SK-N-SH (cell line): ENCODE measurements at regions of chr5 and their contacts with region 1.

Region 1: GRCh38 chr5:179284751-179285631 is 60.3 kb downstream of the ADAMTS2 start:
- DNase-seq: peak; percentile 89
- H3K4me3 ChIP-seq: no peak overlapping the region
- H3K27ac ChIP-seq: peak overlapping the region in 1 of 2 experiments; percentile 97; a peak in 2 of 4 replicates
- H3K4me1 ChIP-seq: peaks cover 0 to 66% of the 10 kb centered on the region in 2 experiments; a peak in 2 of 4 replicates
- H3K27me3 ChIP-seq: no peaks in the 10 kb centered on the region
- CTCF ChIP-seq: no peak
- EP300 ChIP-seq: peak in 1 of 2 experiments; percentile 88; a peak in 2 of 4 replicates
- RAD21 ChIP-seq: peak; percentile 14; the same call in 1 of the 2 replicates

Region 2: DNA sequence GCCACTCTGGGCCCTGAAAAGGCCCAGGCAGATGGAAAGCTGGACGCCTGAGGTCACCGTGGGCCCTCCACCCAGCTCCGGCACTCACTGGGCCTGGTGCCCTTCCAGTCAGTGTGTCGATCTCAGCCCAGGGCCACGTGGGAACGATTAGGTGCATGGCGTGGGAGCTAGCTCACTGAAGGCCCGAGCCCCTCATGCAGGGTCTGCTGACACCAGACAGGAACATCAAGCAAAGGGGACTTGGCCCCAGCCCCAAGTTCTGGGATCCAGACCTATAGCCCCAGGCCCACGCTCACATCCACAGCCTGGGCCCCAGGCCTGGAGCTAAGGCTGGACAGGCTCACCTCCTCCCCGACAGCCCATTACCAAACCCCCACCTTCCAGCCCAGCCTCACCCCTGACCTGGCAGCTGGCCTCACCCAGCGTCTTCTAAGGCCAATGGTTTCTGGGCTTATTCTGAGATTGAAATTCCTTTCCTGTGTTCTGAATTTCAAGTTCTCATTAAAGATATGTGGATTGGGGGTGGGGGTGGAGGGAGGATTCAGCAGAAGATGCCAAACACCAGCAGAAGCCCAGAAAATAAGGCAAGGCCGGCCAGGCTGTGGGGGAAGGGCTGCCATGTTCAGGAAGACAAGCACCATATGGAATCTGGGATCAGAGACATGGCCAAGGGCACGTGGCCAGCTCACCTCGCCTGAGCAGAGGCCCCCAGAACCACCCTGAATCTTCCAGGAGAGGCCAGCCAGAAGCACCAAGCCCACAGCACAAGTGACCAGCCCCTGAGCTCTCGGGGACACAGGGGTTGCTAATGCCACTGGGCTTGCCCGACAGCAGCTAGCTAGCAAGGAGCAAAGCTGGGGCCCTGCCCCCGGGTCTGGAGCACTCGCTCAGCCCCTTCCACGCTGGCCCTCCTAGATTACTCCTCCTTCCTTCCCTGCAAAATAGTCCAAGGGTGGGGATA is 14.1 kb before region 1 on chr5:
- CTCF ChIA-PET with region 1: interaction called, 7 read pairs
- POLR2A ChIA-PET with region 1: interaction called, 13 read pairs
- DNase-seq: peak; percentile 74
- H3K4me3 ChIP-seq: no peak overlapping the region
- H3K27ac ChIP-seq: peak overlapping the region in 1 of 2 experiments; percentile 96; a peak in 2 of 4 replicates
- H3K4me1 ChIP-seq: peaks cover 0 to 100% of the 10 kb centered on the region in 2 experiments; a peak in 1 of 4 replicates
- H3K27me3 ChIP-seq: no peaks in the 10 kb centered on the region
- CTCF ChIP-seq: no peak
- EP300 ChIP-seq: peak in 1 of 2 experiments; percentile 71; a peak in 2 of 4 replicates
- RAD21 ChIP-seq: no peak

Region 3: GRCh38 chr5:179300581-179301180 is 15.7 kb after region 1 on chr5:
- CTCF ChIA-PET with region 1: no interaction called
- POLR2A ChIA-PET with region 1: no interaction called
- DNase-seq: no peak
- H3K4me3 ChIP-seq: no peak overlapping the region
- H3K27ac ChIP-seq: peak overlapping the region in 1 of 2 experiments; percentile 76; a peak in 2 of 4 replicates
- H3K4me1 ChIP-seq: peaks cover 0 to 61% of the 10 kb centered on the region in 2 experiments; a peak in 1 of 4 replicates
- H3K27me3 ChIP-seq: no peaks in the 10 kb centered on the region
- CTCF ChIP-seq: no peak
- EP300 ChIP-seq: no peak
- RAD21 ChIP-seq: no peak